ENCODE measurements at regions of chr6 and their contacts with region 1.

Region 1: DNA sequence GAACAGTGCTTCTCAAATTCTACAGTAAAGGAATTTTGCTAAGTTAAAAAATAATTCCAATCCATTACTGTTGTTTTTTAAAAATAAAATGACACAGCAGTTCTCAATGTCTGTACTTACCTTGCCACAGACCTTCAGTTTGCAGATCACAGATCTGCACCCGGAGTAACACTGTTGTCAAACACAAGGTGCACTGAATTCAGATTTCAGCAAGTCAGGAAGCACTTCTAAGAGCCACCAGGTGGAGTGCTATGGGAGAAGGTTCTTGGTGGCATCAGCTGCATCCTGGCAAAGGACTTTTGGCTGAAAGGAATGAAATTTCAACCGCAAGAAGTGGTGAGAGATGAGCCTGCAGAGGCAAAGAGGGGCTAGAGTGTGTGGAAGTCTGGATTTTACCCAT is 17.4 kb downstream of the RSPH4A start:
- DNase-seq: no peak
- ATAC-seq: peak; percentile 71; the same call in 1 of the 2 replicates
- H3K4me3 ChIP-seq: no peak overlapping the region
- H3K27ac ChIP-seq: no peak overlapping the region
- H3K4me1 ChIP-seq: no peaks in the 10 kb centered on the region
- H3K27me3 ChIP-seq: no peaks in the 10 kb centered on the region
- CTCF ChIP-seq: peak; percentile 73

Region 2: DNA sequence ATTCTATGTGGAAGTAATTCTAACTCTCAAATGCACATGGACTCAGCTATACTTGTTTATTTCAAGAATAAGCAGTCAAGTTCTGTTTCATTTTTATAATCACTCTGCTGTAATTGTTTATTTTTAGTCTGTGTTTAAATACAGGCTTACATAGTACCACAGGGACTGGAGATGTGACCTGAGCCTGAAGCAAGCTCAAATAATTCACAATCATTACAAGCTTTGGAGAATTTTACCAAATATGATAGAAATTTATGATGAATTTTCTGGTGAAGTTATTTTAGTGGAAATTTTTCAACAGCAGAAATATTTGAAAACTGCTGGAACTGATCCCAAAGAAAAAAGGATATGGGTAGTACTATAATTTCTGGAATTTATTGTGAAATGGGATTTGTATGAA is 304.5 kb before region 1 on chr6:
- CTCF ChIA-PET with region 1: interaction called, 10 read pairs
- POLR2A ChIA-PET with region 1: no interaction called
- in situ Hi-C with region 1: no loop called
- intact Hi-C with region 1: no loop called
- DNase-seq: no peak
- ATAC-seq: no peak
- H3K4me3 ChIP-seq: no peak overlapping the region
- H3K27ac ChIP-seq: no peak overlapping the region
- H3K4me1 ChIP-seq: no peaks in the 10 kb centered on the region
- H3K27me3 ChIP-seq: no peaks in the 10 kb centered on the region
- CTCF ChIP-seq: no peak

Region 3: GRCh38 chr6:116392132-116393013 is 241.3 kb before region 1 on chr6:
- CTCF ChIA-PET with region 1: no interaction called
- POLR2A ChIA-PET with region 1: no interaction called
- in situ Hi-C with region 1: no loop called
- intact Hi-C with region 1: no loop called
- DNase-seq: no peak
- ATAC-seq: no peak
- H3K4me3 ChIP-seq: no peak overlapping the region
- H3K27ac ChIP-seq: no peak overlapping the region
- H3K4me1 ChIP-seq: no peaks in the 10 kb centered on the region
- H3K27me3 ChIP-seq: no peaks in the 10 kb centered on the region
- CTCF ChIP-seq: no peak